ENCODE measurements at regions of chr20 and their contacts with region 1.

Region 1: GRCh38 chr20:25057234-25058050 is 497 bp downstream of the ACSS1 start:
- DNase-seq: peak; percentile 69
- H3K4me3 ChIP-seq: peak overlapping the region; percentile 77 to 87
- H3K27ac ChIP-seq: peak overlapping the region; percentile 85 to 93
- H3K4me1 ChIP-seq: peaks cover 17% of the 10 kb centered on the region
- H3K27me3 ChIP-seq: no peaks in the 10 kb centered on the region
- CTCF ChIP-seq: peak in 1 of 4 experiments; percentile 20
- POLR2A ChIP-seq: peak; percentile 35

Region 2: GRCh38 chr20:23637282-23638221 is 1419.9 kb before region 1 on chr20 and contains the start of gene CST3:
- intact Hi-C with region 1: loop called (anchors 10 kb)
- DNase-seq: peak; percentile 83
- H3K4me3 ChIP-seq: peak within 1 kb of the TSS; percentile 74 to 96
- H3K27ac ChIP-seq: peak within 1 kb of the TSS; percentile 80 to 89
- H3K4me1 ChIP-seq: peaks cover 9% of the 10 kb centered on the region
- H3K27me3 ChIP-seq: no peaks in the 10 kb centered on the region
- CTCF ChIP-seq: no peak
- POLR2A ChIP-seq: peak; percentile 75
- total RNA-seq, gene CST3: 1,170 to 3,384 TPM

Region 3: DNA sequence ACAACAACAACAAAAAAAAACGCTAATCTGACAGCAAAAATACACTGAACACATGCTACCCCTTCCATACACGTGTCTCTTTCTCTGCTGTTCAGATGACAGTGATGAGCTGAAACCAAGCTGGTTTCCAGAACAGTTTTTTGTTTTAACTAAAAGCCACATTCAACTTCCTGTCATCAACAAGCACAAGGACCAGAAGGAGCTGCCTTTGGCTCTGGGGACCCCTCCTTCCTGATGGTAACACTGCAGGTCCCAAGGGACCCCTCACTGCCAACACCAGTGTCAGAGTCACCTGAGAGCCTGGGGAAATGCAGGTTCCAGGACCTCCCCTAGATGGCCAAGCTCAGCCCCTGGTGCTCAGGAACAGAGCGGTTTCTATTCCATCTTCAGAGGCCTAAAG is 102.4 kb before region 1 on chr20:
- intact Hi-C with region 1: no loop called
- DNase-seq: no peak
- H3K4me3 ChIP-seq: no peak overlapping the region
- H3K27ac ChIP-seq: no peak overlapping the region
- H3K4me1 ChIP-seq: no peaks in the 10 kb centered on the region
- H3K27me3 ChIP-seq: no peaks in the 10 kb centered on the region
- CTCF ChIP-seq: no peak
- POLR2A ChIP-seq: no peak

Region 4: DNA sequence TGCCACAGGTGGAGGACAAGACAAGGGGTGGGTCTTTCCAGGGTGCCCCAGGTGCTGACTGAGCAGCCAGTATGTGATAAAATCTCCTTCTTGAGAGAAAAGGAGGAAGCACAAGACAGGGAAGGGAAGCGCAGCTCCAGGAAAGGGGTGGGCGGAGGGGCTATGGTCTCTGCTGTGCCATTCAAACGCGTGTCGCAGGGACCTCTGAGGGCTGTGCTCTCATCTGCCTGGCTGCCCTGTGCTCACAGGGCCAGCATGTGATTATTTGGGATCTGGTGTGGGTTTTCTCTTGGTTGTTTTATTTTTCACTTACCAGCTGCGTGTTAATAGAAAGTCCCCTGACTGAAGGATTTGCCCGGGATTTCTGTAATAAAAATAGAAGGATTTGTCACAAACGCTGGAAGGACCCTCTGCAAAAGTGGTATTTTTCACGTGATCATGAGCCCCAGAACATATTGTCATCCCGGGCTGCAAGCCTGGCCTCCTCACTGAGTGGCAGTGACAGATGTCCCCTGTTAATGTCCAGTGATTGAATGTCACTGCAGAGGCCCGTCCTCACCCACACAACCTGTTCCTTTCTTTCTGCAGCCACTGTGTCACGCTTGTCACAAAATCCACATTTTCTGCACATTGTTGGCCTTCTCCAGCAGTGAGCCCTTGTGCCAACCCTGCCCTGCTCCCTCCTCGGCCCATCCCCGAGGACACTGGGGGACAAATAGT is 59.5 kb after region 1 on chr20:
- intact Hi-C with region 1: no loop called
- DNase-seq: no peak
- H3K4me3 ChIP-seq: no peak overlapping the region
- H3K27ac ChIP-seq: no peak overlapping the region
- H3K4me1 ChIP-seq: peaks cover 9% of the 10 kb centered on the region
- H3K27me3 ChIP-seq: no peaks in the 10 kb centered on the region
- CTCF ChIP-seq: no peak
- POLR2A ChIP-seq: no peak

Region 5: GRCh38 chr20:25178563-25179438 is 121.4 kb after region 1 on chr20:
- intact Hi-C with region 1: loop called (anchors 5 kb)
- DNase-seq: no peak
- H3K4me3 ChIP-seq: no peak overlapping the region
- H3K27ac ChIP-seq: peak overlapping the region; percentile 35 to 50
- H3K4me1 ChIP-seq: no peaks in the 10 kb centered on the region
- H3K27me3 ChIP-seq: no peaks in the 10 kb centered on the region
- CTCF ChIP-seq: peak in 3 of 4 experiments; percentile 66 to 78 (median 74)
- POLR2A ChIP-seq: no peak

Region 6: GRCh38 chr20:25324412-25324811 is 267.0 kb after region 1 on chr20:
- intact Hi-C with region 1: no loop called
- DNase-seq: no peak
- H3K4me3 ChIP-seq: no peak overlapping the region
- H3K27ac ChIP-seq: no peak overlapping the region
- H3K4me1 ChIP-seq: peaks cover 4% of the 10 kb centered on the region
- H3K27me3 ChIP-seq: no peaks in the 10 kb centered on the region
- CTCF ChIP-seq: no peak
- POLR2A ChIP-seq: no peak